IMR-90 (cell line): ENCODE measurements at regions of chr9 and their contacts with region 1.

Region 1: DNA sequence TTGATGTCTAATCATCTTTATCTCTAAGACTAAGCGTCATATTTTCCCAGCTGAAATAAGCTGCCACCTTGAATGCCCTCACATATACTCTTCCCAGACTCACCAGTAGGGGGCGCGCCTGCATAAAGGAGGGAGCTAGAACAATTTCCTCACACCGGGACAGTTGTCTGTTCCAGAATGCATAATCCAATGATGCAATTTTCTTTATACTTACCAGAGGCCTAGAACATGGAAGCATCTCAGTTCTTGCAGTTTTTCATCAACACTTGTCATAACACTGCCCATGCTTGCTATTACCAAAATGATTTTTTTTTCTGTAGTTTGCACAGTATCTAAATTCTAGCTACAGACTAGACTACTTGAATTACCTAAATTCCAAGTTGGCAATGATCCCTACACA is 203.9 kb downstream of the FRMD3 start:
- DNase-seq: peak; percentile 50
- ATAC-seq: peak; percentile 72
- H3K4me3 ChIP-seq: no peak overlapping the region
- H3K27ac ChIP-seq: no peak overlapping the region
- H3K4me1 ChIP-seq: no peaks in the 10 kb centered on the region
- H3K27me3 ChIP-seq: no peaks in the 10 kb centered on the region
- CTCF ChIP-seq: peak; percentile 64
- POLR2A ChIP-seq: no peak
- RAD21 ChIP-seq: peak; percentile 64

Region 2: GRCh38 chr9:82923448-82924249 is 410.7 kb before region 1 on chr9:
- CTCF ChIA-PET with region 1: no interaction called
- POLR2A ChIA-PET with region 1: no interaction called
- dilution Hi-C with region 1: no loop called
- in situ Hi-C with region 1: no loop called
- intact Hi-C with region 1: no loop called
- DNase-seq: no peak
- ATAC-seq: no peak
- H3K4me3 ChIP-seq: no peak overlapping the region
- H3K27ac ChIP-seq: no peak overlapping the region
- H3K4me1 ChIP-seq: no peaks in the 10 kb centered on the region
- H3K27me3 ChIP-seq: no peaks in the 10 kb centered on the region; the same call in 1 of the 2 replicates
- CTCF ChIP-seq: no peak
- POLR2A ChIP-seq: no peak
- RAD21 ChIP-seq: no peak

Region 3: GRCh38 chr9:83544002-83544698 is 209.8 kb after region 1 on chr9:
- CTCF ChIA-PET with region 1: interaction called, 37 read pairs
- POLR2A ChIA-PET with region 1: no interaction called
- dilution Hi-C with region 1: no loop called
- in situ Hi-C with region 1: no loop called
- intact Hi-C with region 1: loop called (anchors 1 kb)
- DNase-seq: peak; percentile 38
- ATAC-seq: peak; percentile 85
- H3K4me3 ChIP-seq: no peak overlapping the region
- H3K27ac ChIP-seq: no peak overlapping the region
- H3K4me1 ChIP-seq: no peaks in the 10 kb centered on the region
- H3K27me3 ChIP-seq: 0 out of 2 replicates have a peak, but pooled peaks cover under 1% of the 10 kb centered on the region
- CTCF ChIP-seq: peak; percentile 46
- POLR2A ChIP-seq: no peak
- RAD21 ChIP-seq: peak; percentile 50

Region 4: DNA sequence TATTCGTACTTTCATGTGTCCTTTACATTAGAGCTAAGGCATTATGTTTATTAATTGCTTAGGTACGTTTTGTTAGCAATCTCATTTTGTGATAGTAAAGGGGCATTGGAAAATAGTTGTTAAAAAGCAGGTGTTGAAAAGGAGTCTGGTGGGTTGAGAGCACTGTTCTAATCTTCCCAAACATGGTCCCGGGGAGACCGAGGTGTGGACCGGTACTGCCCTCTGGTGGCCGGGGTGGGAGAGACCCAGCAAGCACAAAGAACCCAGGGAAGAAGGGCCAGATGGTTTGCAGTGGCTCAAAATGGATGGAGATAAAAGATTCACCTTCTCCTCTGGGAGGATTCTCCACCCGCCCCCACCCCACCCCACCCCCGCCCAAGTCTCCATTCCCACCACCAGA is 314.8 kb after region 1 on chr9:
- CTCF ChIA-PET with region 1: no interaction called
- POLR2A ChIA-PET with region 1: no interaction called
- dilution Hi-C with region 1: no loop called
- in situ Hi-C with region 1: no loop called
- intact Hi-C with region 1: loop called (anchors 1 kb)
- DNase-seq: peak; percentile 28
- ATAC-seq: peak; percentile 88
- H3K4me3 ChIP-seq: no peak overlapping the region
- H3K27ac ChIP-seq: no peak overlapping the region
- H3K4me1 ChIP-seq: no peaks in the 10 kb centered on the region
- H3K27me3 ChIP-seq: no peaks in the 10 kb centered on the region
- CTCF ChIP-seq: peak; percentile 71
- POLR2A ChIP-seq: no peak
- RAD21 ChIP-seq: peak; percentile 64